AG04450 (cell line): ENCODE measurements at regions of chr2 and their contacts with region 1.

Region 1: DNA sequence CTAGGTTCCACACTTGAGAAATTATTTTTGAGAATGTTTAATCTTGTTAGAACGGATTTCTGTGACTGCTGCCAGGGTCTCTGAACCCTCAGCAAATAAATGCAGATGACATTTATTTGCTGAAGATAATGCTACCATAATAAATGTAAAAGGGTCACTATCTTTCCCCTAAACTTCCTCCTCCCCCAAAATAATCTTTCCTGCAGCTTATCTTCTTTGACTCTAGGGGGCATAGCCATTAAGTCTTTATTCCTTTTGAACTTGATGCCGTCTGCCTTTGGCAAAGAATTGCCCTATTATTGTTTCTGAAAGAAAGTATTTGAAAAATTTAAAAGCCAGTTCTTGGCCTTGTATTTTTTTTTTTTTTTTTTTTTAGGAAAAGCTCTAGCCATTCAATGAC is 63.6 kb upstream of the ACSL3 start:
- DNase-seq: no peak
- H3K4me3 ChIP-seq: no peak overlapping the region
- H3K27ac ChIP-seq: no peak overlapping the region
- H3K27me3 ChIP-seq: no peaks in the 10 kb centered on the region
- CTCF ChIP-seq: peak; percentile 63

Region 2: GRCh38 chr2:222811828-222812227 is 14.6 kb after region 1 on chr2:
- CTCF ChIA-PET with region 1: interaction called, 23 read pairs
- POLR2A ChIA-PET with region 1: no interaction called
- DNase-seq: no peak
- H3K4me3 ChIP-seq: no peak overlapping the region
- H3K27ac ChIP-seq: no peak overlapping the region
- H3K27me3 ChIP-seq: peaks cover 5% of the 10 kb centered on the region
- CTCF ChIP-seq: no peak

Region 3: GRCh38 chr2:222827417-222827816 is 30.2 kb after region 1 on chr2:
- CTCF ChIA-PET with region 1: interaction called, 12 read pairs
- POLR2A ChIA-PET with region 1: no interaction called
- DNase-seq: no peak
- H3K4me3 ChIP-seq: no peak overlapping the region
- H3K27ac ChIP-seq: no peak overlapping the region
- H3K27me3 ChIP-seq: peaks cover 16% of the 10 kb centered on the region
- CTCF ChIP-seq: no peak

Region 4: DNA sequence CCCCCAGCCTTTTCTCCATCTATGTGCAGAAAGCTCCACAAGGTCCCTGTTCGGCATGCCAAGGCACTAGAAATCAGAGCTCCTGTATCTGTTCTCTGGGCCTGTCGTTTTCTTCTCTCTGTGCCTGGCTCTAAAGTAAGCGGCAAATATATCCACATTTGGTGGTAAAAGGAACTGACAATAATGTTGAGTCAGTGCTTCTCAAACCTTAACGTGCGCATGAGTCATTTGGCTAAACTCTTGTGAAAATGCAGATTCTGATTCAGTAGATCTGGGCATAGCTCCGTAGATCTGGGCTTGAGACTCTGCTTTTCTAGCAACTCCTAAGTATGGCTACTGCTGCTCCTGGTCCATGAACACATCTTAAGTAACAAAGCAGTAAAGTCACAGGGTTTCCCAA is 47.1 kb after region 1 on chr2:
- CTCF ChIA-PET with region 1: interaction called, 13 read pairs
- POLR2A ChIA-PET with region 1: no interaction called
- DNase-seq: peak; percentile 58
- H3K4me3 ChIP-seq: peak overlapping the region; percentile 14; the same call in 1 of the 2 replicates
- H3K27ac ChIP-seq: peak overlapping the region; percentile 82
- H3K27me3 ChIP-seq: no peaks in the 10 kb centered on the region
- CTCF ChIP-seq: no peak

Region 5: DNA sequence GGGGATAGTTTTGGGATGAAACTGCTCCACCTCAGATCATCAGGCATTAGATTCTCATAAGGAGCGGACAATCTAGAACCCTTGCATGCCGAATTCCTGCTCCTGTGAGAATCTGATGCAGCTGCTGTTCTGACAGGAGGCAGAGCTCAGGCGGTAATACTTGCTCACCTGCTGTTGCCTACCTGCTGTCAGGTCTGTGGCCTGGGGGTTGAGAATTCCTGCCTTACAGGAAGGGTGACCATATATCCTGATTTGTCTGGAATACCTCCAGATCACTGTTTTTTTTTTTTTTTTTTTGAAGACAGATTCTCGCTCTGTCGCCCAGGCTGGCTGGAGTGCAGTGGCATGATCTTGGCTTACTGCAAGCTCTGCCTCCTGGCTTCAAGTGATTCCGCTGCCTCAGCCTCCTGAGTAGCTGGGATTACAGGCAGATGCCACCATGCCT is 85.2 kb after region 1 on chr2:
- CTCF ChIA-PET with region 1: interaction called, 12 read pairs
- POLR2A ChIA-PET with region 1: no interaction called
- DNase-seq: no peak
- H3K4me3 ChIP-seq: no peak overlapping the region
- H3K27ac ChIP-seq: no peak overlapping the region
- H3K27me3 ChIP-seq: no peaks in the 10 kb centered on the region
- CTCF ChIP-seq: no peak

Region 6: DNA sequence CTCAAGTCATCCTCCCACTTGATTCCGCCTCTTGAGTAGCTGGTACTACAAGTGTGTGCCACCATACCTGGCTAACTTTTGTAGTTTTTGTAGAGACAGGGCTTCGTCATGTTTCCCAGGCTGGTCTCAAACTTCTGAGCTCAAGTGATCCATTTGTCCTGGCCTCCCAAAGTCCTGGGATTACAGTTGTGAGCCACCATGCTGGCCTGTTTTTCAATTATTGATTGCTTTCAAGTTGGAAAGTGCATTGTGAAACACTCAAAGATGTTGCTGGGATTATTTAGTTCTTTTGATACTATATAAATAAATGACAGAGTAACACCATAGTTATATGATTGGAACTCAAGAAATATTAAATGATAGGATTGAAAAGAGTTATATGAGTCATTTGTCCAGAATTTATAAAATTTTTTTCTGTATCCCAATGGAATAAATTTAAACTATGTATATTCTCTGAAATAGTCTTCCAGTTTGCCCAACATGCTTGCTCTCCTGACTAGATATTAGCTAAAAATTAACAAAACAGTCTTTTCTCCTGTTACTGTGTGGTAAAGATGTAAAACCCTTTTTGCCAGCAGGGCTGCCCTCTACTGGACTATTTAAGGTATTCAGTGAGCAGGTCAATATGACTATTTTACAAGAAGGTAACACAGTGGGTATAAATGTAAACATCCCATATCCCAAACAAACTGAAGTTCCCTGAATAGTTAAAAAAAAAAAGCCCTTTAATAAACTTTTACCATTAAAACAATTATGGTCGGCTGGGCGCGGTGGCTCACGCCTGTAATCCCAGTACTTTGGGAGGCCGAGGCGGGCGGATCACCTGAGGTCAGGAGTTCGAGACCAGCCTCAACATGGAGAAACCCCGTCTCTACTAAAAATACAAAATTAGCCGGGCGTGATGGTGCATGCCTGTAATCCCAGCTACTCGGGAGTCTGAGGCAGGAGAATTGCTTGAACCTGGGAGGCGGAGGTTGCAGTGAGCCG is 106.3 kb after region 1 on chr2:
- CTCF ChIA-PET with region 1: interaction called, 12 read pairs
- POLR2A ChIA-PET with region 1: interaction called, 3 read pairs
- DNase-seq: no peak
- H3K4me3 ChIP-seq: no peak overlapping the region
- H3K27ac ChIP-seq: peak overlapping the region; percentile 77
- H3K27me3 ChIP-seq: no peaks in the 10 kb centered on the region
- CTCF ChIP-seq: peak; percentile 67